Sigmoid colon (tissue), 7 donors: ENCODE measurements at regions of chr7 and their contacts with region 1.

Region 1: GRCh38 chr7:101911800-101912715 is 94.6 kb downstream of the CUX1 start:
- DNase-seq: peak; percentile 97
- H3K4me3 ChIP-seq: peak overlapping the region in 2 of 4 donors; percentile 38 to 45
- H3K27ac ChIP-seq: peak overlapping the region; percentile 38 to 93 (median 86)
- H3K4me1 ChIP-seq: peaks cover 0 to 60% (median 55%) of the 10 kb centered on the region in 4 donors
- H3K27me3 ChIP-seq: no peaks in the 10 kb centered on the region
- CTCF ChIP-seq: peak in 1 of 4 experiments; percentile 17
- EP300 ChIP-seq: peak; percentile 69 to 99 (median 98)
- POLR2A ChIP-seq: no peak

Region 2: DNA sequence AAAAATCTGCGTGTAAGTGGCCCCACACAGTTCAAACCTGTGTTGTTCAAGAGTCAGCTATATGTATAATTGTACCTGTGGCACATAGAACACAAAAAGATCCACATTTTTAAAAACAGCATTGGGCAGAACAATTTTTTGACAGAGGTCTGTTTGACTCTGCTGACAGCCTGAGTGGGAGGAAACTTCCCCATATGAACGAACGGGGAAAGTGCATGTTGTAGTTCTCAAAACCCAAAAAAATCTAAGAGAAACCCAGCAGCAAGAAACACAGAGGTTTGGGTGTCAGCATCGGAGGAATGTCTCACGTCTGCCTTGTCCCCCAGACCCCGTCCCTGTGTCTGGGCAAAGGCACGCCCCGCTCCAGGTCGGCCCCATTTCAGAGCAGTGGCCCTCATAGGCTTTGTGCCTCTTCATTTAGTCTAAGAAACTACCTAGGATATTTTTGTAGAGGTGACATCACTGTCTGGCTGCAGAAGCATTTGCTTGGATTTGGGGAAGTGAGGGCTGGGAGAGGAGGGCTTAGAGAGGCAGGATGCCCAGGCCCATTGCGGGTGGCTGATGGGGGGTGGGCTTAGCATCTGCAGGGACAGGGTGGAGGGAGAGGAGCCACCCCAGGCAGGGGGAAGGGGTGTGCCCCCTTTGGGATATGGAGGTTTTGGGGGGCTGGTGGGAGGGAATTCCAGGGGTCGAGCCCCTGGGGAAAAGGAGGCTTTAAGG is 83.6 kb before region 1 on chr7:
- intact Hi-C with region 1: no loop called
- DNase-seq: peak; percentile 57
- H3K4me3 ChIP-seq: no peak overlapping the region
- H3K27ac ChIP-seq: no peak overlapping the region
- H3K4me1 ChIP-seq: peaks cover 0 to 35% (median 21%) of the 10 kb centered on the region in 4 donors
- H3K27me3 ChIP-seq: no peaks in the 10 kb centered on the region
- CTCF ChIP-seq: no peak
- EP300 ChIP-seq: no peak
- POLR2A ChIP-seq: no peak

Region 3: DNA sequence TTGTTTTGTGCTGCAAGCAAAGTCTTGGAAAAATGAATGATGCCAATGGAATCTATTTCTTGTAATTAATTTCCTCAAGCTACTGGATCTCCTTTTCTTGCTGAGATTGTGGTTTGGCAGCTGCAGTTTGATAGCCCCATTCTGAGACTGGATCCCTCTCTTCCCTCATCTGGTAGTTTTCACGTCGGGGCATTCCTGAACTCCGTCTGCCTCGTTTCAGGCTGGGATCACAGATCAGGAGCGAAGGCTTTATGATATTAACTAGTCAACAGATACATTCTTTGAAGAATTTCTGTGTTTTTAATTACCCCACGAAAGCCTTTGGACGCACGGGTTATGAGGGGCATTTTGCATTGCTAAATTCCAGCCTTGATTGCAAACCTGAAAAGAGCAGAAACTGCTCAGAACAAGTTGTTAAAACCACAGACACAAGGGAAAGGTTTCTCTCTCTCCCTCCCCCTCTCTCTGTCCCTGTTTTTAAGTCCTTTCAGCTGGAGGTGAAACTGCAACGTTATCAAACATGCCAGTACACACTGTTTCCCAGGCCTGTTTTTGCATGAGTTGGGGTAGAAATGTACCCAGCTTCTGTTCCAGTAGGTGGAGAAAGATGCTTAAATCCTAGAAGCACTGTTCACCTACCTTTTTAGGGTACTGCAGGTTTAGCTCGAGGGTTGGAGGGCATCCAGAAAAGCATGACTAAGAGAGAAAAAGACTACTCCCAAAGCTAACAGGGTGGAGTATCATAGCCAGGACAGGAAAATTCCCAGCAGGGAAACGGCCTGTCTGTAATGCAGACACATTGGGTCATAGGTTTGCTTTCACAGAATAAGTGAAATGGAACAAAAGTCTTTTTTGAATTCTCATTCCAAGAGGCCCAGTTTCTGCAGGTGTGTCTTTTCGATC is 29.7 kb after region 1 on chr7:
- intact Hi-C with region 1: loop called (anchors 2 kb)
- DNase-seq: peak; percentile 86
- H3K4me3 ChIP-seq: no peak overlapping the region
- H3K27ac ChIP-seq: peak overlapping the region; percentile 82 to 93 (median 86)
- H3K4me1 ChIP-seq: peaks cover 0 to 92% (median 77%) of the 10 kb centered on the region in 4 donors
- H3K27me3 ChIP-seq: no peaks in the 10 kb centered on the region
- CTCF ChIP-seq: no peak
- EP300 ChIP-seq: peak in 1 of 4 donors; percentile 17
- POLR2A ChIP-seq: no peak

Region 4: DNA sequence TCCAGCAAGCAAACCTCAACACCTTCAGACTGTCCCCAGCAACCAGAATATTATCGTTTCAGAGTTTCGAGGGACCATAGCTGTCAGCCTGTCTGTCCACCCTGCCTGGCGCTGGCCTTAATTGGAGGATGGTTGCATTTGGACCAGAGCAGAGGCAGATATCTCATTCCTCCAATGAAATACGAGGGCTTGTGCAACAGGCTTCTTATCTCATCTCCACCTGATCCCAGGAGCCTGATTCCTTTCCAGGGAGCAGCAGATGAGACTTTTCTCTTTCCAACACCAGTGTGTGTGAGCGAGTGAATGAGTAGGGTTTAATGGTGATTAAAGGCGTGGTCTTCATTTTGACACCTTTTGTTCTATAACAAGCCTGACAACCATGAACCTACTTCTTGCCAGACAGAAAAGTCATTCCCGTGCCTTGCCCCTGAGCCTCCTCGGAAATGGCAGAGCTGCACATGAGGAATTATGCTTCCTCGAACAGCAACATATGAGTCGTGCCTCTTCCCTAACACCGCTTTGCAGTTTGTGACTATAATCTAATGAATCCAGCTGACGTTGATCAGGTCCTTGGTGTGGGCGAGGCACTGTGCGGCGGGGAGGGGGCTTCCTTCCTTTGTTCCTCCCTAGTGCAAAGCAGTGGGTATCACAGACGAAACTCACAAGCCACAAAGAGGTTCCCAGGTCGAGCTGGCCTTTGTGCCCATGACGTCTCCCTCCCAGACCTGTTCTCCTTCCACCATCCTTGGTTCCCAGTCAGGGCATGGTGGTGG is 52.8 kb after region 1 on chr7:
- intact Hi-C with region 1: no loop called
- DNase-seq: no peak
- H3K4me3 ChIP-seq: no peak overlapping the region
- H3K27ac ChIP-seq: no peak overlapping the region
- H3K4me1 ChIP-seq: peaks cover 0 to 33% (median 28%) of the 10 kb centered on the region in 4 donors
- H3K27me3 ChIP-seq: no peaks in the 10 kb centered on the region
- CTCF ChIP-seq: no peak
- EP300 ChIP-seq: no peak
- POLR2A ChIP-seq: no peak

Region 5: GRCh38 chr7:102306875-102307677 is 395.0 kb after region 1 on chr7:
- intact Hi-C with region 1: no loop called
- DNase-seq: no peak
- H3K4me3 ChIP-seq: no peak overlapping the region
- H3K27ac ChIP-seq: no peak overlapping the region
- H3K4me1 ChIP-seq: no peaks in the 10 kb centered on the region
- H3K27me3 ChIP-seq: no peaks in the 10 kb centered on the region
- CTCF ChIP-seq: no peak
- EP300 ChIP-seq: no peak
- POLR2A ChIP-seq: no peak

Region 6: DNA sequence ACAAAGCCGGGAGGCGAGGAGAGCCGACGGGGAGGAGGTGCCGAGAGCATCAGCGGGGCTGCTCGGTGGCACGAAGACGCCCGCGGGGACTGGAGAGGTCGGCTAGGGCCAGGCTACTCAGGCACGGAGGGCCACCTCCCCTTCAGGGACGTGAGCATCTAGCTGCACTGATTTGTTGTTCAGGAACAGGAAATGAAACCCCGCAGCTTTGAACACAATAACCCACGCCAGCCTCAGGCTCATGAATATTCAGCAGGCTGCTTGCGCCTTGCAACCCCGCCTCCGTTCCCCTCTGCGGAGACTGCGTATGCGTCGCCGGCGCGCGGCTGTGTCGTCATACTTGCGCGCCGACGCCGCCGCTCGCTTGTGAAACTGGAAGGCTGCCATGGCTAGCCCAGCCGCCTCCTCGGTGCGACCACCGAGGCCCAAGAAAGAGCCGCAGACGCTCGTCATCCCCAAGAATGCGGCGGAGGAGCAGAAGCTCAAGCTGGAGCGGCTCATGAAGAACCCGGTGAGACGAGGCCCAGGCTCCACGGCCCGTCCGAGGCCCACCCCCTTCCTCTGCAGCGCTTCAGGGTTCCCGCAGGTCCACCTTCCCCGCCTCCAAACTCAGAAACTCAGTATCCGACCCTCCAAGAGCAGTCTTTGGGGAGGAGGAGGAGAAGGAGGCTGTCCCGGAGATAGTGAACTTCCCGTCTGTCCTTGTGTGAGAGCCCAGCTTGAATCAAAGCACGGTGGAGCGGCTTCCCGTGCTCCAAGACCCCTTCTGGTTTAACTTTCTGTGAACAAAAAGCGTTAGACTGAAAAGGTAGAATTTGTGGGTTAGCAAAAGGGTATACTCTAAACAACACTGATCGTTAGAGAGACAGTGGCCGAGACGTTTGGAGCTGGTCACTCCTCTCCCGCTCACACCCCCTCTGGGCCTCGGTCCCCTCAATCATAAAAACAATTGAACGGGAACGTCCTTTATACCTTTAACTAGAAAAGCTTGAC is 484.3 kb after region 1 on chr7 and contains the start of gene PRKRIP1:
- intact Hi-C with region 1: no loop called
- DNase-seq: peak; percentile 92
- H3K4me3 ChIP-seq: peak within 1 kb of the TSS; percentile 77 to 90 (median 86)
- H3K27ac ChIP-seq: peak within 1 kb of the TSS; percentile 82 to 85 (median 84)
- H3K4me1 ChIP-seq: peaks cover 0 to 19% (median 10%) of the 10 kb centered on the region in 4 donors
- H3K27me3 ChIP-seq: no peaks in the 10 kb centered on the region
- CTCF ChIP-seq: no peak
- EP300 ChIP-seq: no peak
- POLR2A ChIP-seq: no peak
- total RNA-seq, gene PRKRIP1: 19.9 to 29.9 (median 25.9) TPM